ENCODE measurements at regions of chr12 and their contacts with region 1.

Region 1: GRCh38 chr12:92145731-92146496 is at the start of gene BTG1:
- DNase-seq: peak; percentile 100
- ATAC-seq: peak; percentile 76
- H3K4me3 ChIP-seq: peak within 1 kb of the TSS; percentile 94 to 100 (median 96)
- H3K4me3 Mint-ChIP-seq: peak within 1 kb of the TSS; percentile 98
- H3K27ac ChIP-seq: peak within 1 kb of the TSS; percentile 87 to 91
- H3K27ac Mint-ChIP-seq: peak within 1 kb of the TSS; percentile 99
- H3K4me1 ChIP-seq: peaks cover 24 to 27% of the 10 kb centered on the region in 2 donors
- H3K4me1 Mint-ChIP-seq: peaks cover 31% of the 10 kb centered on the region
- H3K27me3 ChIP-seq: no peaks in the 10 kb centered on the region
- H3K27me3 Mint-ChIP-seq: no peaks in the 10 kb centered on the region
- CTCF ChIP-seq: no peak
- total RNA-seq, gene BTG1: 733 and 790 TPM in 2 replicates

Region 2: GRCh38 chr12:91382081-91382543 is 763.8 kb before region 1 on chr12:
- CTCF ChIA-PET with region 1: interaction called, 10 read pairs
- POLR2A ChIA-PET with region 1: interaction called, 4 read pairs
- intact Hi-C with region 1: loop called (anchors 1 kb)
- DNase-seq: peak; percentile 89
- ATAC-seq: peak; percentile 82
- H3K4me3 ChIP-seq: peak overlapping the region; percentile 11 to 81 (median 47)
- H3K4me3 Mint-ChIP-seq: peak overlapping the region; percentile 83
- H3K27ac ChIP-seq: peak overlapping the region in 1 of 2 donors; percentile 20
- H3K27ac Mint-ChIP-seq: peak overlapping the region; percentile 28
- H3K4me1 ChIP-seq: peaks cover 5 to 9% of the 10 kb centered on the region in 2 donors
- H3K4me1 Mint-ChIP-seq: peaks cover 10% of the 10 kb centered on the region
- H3K27me3 ChIP-seq: no peaks in the 10 kb centered on the region
- H3K27me3 Mint-ChIP-seq: peaks cover 8% of the 10 kb centered on the region
- CTCF ChIP-seq: peak; percentile 91

Region 3: GRCh38 chr12:91819132-91819447 is 326.8 kb before region 1 on chr12:
- CTCF ChIA-PET with region 1: no interaction called
- POLR2A ChIA-PET with region 1: no interaction called
- intact Hi-C with region 1: no loop called
- DNase-seq: no peak
- ATAC-seq: no peak
- H3K4me3 ChIP-seq: no peak overlapping the region
- H3K4me3 Mint-ChIP-seq: no peak overlapping the region
- H3K27ac ChIP-seq: no peak overlapping the region
- H3K27ac Mint-ChIP-seq: no peak overlapping the region
- H3K4me1 ChIP-seq: no peaks in the 10 kb centered on the region
- H3K4me1 Mint-ChIP-seq: no peaks in the 10 kb centered on the region
- H3K27me3 ChIP-seq: no peaks in the 10 kb centered on the region
- H3K27me3 Mint-ChIP-seq: no peaks in the 10 kb centered on the region
- CTCF ChIP-seq: no peak

Region 4: DNA sequence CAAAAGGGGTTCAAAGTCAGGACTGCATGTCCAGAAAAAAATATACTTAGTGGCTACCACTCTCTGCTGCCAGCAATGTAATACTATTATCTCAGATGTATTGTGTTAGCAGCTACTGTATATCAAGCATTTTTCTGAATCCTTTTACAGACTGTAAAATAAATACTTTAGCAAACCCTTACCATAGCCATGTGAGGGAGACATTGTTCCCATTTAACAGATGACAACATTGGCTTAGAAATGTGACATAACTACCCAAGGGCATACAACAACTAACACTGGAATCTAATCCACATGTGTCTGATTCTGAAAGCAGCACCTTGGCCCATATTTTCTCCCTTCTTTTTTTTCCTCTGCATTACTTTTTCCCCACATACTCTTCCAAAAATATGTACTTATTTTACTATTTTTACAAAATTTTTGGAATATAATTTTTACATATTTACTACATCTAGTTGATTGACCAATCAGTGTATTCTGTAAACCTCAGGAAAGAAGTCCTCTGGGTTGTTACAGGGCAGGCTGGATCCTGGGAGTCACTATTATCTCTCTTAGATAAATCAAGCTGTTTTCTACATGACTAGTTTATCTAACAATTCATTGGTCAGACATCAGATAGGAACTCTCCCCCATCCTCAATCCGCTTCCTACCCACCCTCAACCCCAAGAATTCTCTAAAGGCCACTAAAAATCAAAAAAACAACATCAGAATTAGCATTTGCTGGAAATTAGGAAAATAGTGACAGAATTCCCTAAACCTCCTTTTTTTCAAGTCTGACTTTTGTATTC is 154.3 kb before region 1 on chr12:
- CTCF ChIA-PET with region 1: interaction called, 8 read pairs
- POLR2A ChIA-PET with region 1: interaction called, 4 read pairs
- intact Hi-C with region 1: loop called (anchors 2 kb)
- DNase-seq: peak; percentile 58
- ATAC-seq: peak; percentile 61
- H3K4me3 ChIP-seq: no peak overlapping the region
- H3K4me3 Mint-ChIP-seq: no peak overlapping the region
- H3K27ac ChIP-seq: no peak overlapping the region
- H3K27ac Mint-ChIP-seq: no peak overlapping the region
- H3K4me1 ChIP-seq: no peaks in the 10 kb centered on the region
- H3K4me1 Mint-ChIP-seq: peaks cover 3% of the 10 kb centered on the region
- H3K27me3 ChIP-seq: no peaks in the 10 kb centered on the region
- H3K27me3 Mint-ChIP-seq: no peaks in the 10 kb centered on the region
- CTCF ChIP-seq: peak; percentile 34

Region 5: DNA sequence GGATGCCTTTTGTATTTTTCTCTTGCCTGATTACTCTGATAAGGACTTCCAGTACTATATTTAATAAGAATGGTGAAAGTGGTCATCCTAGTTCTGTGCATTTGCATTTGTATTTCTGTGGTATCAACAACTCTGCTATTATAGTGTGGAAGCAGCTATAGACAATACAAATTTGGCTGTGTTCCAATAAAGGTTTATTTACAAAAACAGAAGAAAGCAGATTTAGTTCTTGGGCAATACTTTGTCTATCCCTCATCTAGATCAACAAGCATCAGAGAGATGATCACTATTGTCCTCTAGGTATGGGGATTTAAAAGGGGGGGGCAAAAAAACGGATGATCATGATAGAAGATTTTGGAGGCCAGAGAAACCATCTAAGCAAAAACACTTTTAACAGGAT is 18.8 kb after region 1 on chr12:
- CTCF ChIA-PET with region 1: interaction called, 5 read pairs
- POLR2A ChIA-PET with region 1: interaction called, 16 read pairs
- intact Hi-C with region 1: loop called (anchors 2 kb)
- DNase-seq: no peak
- ATAC-seq: no peak
- H3K4me3 ChIP-seq: no peak overlapping the region
- H3K4me3 Mint-ChIP-seq: no peak overlapping the region
- H3K27ac ChIP-seq: peak overlapping the region in 1 of 2 donors; percentile 65
- H3K27ac Mint-ChIP-seq: peak overlapping the region; percentile 53
- H3K4me1 ChIP-seq: peaks cover 40 to 58% of the 10 kb centered on the region in 2 donors
- H3K4me1 Mint-ChIP-seq: peaks cover 70% of the 10 kb centered on the region
- H3K27me3 ChIP-seq: no peaks in the 10 kb centered on the region
- H3K27me3 Mint-ChIP-seq: no peaks in the 10 kb centered on the region
- CTCF ChIP-seq: no peak

Region 6: DNA sequence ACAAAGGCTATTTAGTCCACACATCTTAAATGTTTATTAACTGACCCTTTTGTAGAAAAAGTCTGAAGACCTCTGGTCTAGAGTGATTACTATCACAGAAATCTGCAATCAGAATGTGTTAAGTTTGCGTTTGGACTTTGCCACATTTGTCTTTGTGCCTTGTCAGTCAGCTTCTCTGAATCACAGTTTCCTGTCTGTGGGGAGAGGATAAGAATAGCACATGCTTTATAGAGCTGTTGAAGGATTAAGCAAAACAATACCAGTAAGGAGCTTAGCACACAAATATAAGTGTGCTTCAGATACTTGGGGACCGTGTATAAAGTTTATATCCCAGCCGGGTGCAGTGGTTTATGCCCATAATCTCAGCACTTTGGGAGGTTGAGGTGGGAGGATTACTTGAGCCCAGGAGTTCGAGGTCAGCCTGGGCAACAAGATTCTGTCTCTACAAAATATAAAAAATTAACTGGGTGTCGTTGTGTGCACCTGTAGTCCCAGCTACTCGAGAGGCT is 62.8 kb after region 1 on chr12:
- CTCF ChIA-PET with region 1: interaction called, 4 read pairs
- POLR2A ChIA-PET with region 1: interaction called, 17 read pairs
- intact Hi-C with region 1: no loop called
- DNase-seq: peak; percentile 45
- ATAC-seq: peak; percentile 88
- H3K4me3 ChIP-seq: peak overlapping the region; percentile 7 to 64 (median 13)
- H3K4me3 Mint-ChIP-seq: peak overlapping the region; percentile 81
- H3K27ac ChIP-seq: peak overlapping the region; percentile 9 to 52
- H3K27ac Mint-ChIP-seq: peak overlapping the region; percentile 83
- H3K4me1 ChIP-seq: peaks cover 20 to 26% of the 10 kb centered on the region in 2 donors
- H3K4me1 Mint-ChIP-seq: peaks cover 31% of the 10 kb centered on the region
- H3K27me3 ChIP-seq: no peaks in the 10 kb centered on the region
- H3K27me3 Mint-ChIP-seq: no peaks in the 10 kb centered on the region
- CTCF ChIP-seq: no peak

Region 7: DNA sequence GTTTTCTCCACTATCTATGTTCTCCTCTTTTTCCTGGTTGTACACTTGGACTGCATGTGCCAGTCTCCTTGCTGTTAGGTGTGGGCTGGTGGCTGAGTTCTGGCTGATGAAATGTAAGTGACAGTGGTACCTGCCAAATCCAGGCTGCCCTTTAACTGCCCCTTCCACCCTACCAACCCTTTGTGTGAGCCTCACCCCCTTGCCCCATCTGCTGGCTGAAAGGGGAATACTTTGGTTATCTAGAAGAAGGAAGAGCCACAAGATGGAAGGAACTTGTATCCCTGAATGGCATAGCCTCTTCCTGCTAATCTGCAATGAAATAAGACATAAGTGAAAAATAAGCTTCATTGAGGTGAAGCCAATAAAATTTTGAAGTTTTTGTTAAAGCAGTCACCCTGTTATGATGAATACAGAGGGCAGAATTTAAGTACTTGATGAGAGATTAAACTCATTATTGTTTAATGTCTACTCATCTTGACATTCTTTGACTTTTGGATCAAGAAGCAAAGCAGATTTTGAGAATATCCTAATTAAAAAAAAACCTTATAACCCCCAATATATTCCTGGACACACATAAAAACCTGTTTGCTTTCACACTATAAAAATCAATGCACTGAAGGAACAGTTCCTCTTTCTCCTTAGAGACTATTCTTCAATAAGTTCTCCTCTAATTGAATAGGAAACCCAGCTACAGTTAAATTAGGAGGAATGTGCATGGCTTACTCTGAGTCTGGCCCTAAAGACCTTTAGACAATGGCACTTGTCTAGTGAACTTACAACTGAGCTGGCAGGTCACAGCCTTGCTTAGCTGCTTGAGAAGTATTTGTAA is 262.4 kb after region 1 on chr12:
- CTCF ChIA-PET with region 1: interaction called, 16 read pairs
- POLR2A ChIA-PET with region 1: interaction called, 23 read pairs
- intact Hi-C with region 1: loop called (anchors 2 kb)
- DNase-seq: peak; percentile 74
- ATAC-seq: peak; percentile 49
- H3K4me3 ChIP-seq: no peak overlapping the region
- H3K4me3 Mint-ChIP-seq: peak overlapping the region; percentile 0
- H3K27ac ChIP-seq: peak overlapping the region; percentile 40 to 71
- H3K27ac Mint-ChIP-seq: peak overlapping the region; percentile 88
- H3K4me1 ChIP-seq: peaks cover 43% of the 10 kb centered on the region in 2 donors
- H3K4me1 Mint-ChIP-seq: peaks cover 67% of the 10 kb centered on the region
- H3K27me3 ChIP-seq: no peaks in the 10 kb centered on the region
- H3K27me3 Mint-ChIP-seq: no peaks in the 10 kb centered on the region
- CTCF ChIP-seq: peak; percentile 57

Region 8: GRCh38 chr12:92485351-92486348 is 339.7 kb after region 1 on chr12:
- CTCF ChIA-PET with region 1: interaction called, 4 read pairs
- POLR2A ChIA-PET with region 1: interaction called, 4 read pairs
- intact Hi-C with region 1: loop called (anchors 5 kb)
- DNase-seq: peak; percentile 52
- ATAC-seq: peak; percentile 15
- H3K4me3 ChIP-seq: peak overlapping the region in 1 of 5 experiments; percentile 20
- H3K4me3 Mint-ChIP-seq: peak overlapping the region; percentile 64
- H3K27ac ChIP-seq: peak overlapping the region; percentile 59 to 81
- H3K27ac Mint-ChIP-seq: peak overlapping the region; percentile 96
- H3K4me1 ChIP-seq: peaks cover 68 to 81% of the 10 kb centered on the region in 2 donors
- H3K4me1 Mint-ChIP-seq: peaks cover 77% of the 10 kb centered on the region
- H3K27me3 ChIP-seq: no peaks in the 10 kb centered on the region
- H3K27me3 Mint-ChIP-seq: no peaks in the 10 kb centered on the region
- CTCF ChIP-seq: no peak